Endothelial cell of umbilical vein (primary cell): ENCODE measurements at regions of chr17 and their contacts with region 1.

Region 1: DNA sequence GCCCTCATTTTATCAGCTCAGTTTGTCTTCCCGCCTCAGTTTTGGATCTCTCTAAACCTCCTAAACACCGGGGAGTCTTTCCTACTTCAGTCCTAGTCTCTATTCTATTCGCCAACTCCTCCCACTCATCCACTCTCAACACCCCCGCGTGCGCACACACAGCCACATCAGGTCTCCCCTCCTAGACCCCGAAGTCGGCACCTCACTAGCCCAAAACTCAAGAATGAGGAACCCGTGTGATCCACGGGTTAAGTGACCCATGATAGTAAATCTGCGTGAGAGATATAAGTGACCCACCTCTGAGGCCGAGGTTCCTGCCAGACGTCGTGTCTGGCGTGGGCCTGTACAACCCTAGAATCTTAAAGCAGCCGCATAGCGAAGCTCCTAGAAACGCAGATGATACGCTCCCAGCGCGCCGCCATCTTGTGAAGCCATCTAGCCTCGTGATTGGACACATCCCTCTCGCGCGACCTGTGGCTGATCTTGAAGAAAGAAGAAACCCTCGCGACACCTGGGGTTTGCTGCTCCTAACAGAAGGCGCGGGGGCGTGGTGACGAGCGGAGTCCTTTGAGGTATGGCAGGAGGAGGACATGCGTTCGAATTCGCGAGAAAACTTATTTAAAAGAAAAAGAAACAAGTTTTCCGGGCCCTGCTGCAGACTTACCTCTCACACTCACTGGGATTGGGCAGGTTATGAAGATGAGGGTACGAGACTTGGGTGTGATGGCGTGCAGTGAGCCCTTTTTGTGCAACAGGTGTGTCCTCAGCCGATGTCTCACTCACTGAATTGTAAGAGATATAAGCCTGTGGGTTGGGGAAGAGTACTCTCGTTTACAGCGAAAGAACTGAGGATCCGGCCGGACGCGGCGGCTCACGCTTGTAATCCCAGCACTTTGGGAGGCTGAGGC is at the start of gene METTL16:
- DNase-seq: peak; percentile 99
- H3K4me3 ChIP-seq: peak within 1 kb of the TSS; percentile 68 to 100 (median 99)
- H3K27ac ChIP-seq: peak within 1 kb of the TSS; percentile 86
- H3K4me1 ChIP-seq: peaks cover 10% of the 10 kb centered on the region
- H3K27me3 ChIP-seq: no peaks in the 10 kb centered on the region
- CTCF ChIP-seq: no peak
- POLR2A ChIP-seq: peak; percentile 69
- total RNA-seq, gene METTL16: 22.9 and 24.7 TPM in 2 replicates

Region 2: GRCh38 chr17:2468270-2468669 is 43.4 kb before region 1 on chr17:
- CTCF ChIA-PET with region 1: no interaction called
- POLR2A ChIA-PET with region 1: no interaction called
- dilution Hi-C with region 1: no loop called
- intact Hi-C with region 1: no loop called
- DNase-seq: no peak
- H3K4me3 ChIP-seq: no peak overlapping the region
- H3K27ac ChIP-seq: no peak overlapping the region
- H3K4me1 ChIP-seq: no peaks in the 10 kb centered on the region
- H3K27me3 ChIP-seq: no peaks in the 10 kb centered on the region
- CTCF ChIP-seq: no peak
- POLR2A ChIP-seq: no peak

Region 3: DNA sequence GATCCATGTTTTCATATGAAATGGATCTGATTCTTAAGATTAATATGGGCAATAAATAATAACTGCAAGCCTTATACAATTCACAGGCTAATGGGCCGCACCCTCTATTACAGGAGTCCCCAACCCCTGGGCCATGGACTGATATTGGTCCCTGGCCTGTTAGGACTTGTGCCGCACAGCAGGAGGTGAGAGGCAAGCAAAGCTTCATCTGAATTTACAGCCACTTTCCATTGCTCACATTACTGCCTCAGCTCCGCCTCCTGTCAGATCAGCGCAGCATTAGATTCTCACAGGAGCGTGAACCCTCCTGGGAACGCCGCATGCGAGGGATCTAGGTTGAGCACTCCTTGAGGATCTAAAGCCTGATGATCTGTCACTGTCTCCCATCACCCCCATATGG is 26.8 kb before region 1 on chr17:
- CTCF ChIA-PET with region 1: interaction called, 4 read pairs
- POLR2A ChIA-PET with region 1: no interaction called
- dilution Hi-C with region 1: no loop called
- intact Hi-C with region 1: loop called (anchors 2 kb)
- DNase-seq: no peak
- H3K4me3 ChIP-seq: no peak overlapping the region
- H3K27ac ChIP-seq: no peak overlapping the region
- H3K4me1 ChIP-seq: peaks cover 5% of the 10 kb centered on the region
- H3K27me3 ChIP-seq: no peaks in the 10 kb centered on the region
- CTCF ChIP-seq: no peak
- POLR2A ChIP-seq: no peak

Region 4: DNA sequence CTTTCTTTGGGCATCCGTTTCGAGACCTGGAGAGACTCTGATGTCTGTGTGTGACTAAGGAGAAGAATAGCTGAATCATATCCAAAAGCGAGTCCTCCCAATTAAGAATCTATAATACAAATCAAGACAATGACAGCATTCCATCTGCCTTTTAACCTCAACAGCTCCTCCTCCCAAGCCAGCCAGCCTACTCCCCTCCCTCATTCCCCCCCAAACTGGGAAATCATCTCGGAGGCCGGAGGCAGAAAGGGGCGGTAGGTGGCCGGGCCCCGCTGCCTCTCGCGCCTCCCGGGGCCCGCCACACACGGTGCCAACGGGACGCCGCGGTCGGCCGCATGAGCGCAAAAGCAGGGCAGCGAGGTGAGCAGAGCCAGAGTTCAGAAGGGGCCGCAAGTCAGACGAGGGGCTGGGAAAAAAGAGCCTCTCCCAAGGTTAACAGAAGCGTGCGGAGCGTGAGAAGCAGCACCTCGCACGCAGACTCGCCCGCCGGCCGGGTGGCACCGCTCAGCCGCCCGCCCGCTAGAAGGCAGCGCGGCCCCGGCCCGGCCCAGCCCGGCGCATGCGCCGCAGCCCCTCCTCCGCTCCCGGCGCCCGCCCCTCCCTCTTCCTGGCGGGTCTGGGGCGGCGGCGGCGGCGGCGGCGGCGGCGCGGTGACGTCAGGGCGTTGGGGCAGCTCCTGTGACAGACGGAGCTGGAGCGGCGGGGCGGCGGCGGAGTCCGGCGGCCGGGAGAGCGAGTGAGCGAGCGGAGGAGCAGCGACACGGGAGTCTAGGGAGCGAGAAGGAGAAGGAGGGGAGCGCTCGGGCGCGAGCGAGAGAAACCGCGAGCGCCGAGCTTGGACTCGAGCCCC is 81.5 kb after region 1 on chr17 and contains the start of gene PAFAH1B1:
- CTCF ChIA-PET with region 1: no interaction called
- POLR2A ChIA-PET with region 1: interaction called, 4 read pairs
- dilution Hi-C with region 1: no loop called
- intact Hi-C with region 1: loop called (anchors 1 kb)
- DNase-seq: peak; percentile 90
- H3K4me3 ChIP-seq: peak within 1 kb of the TSS; percentile 95 to 100 (median 98)
- H3K27ac ChIP-seq: peak within 1 kb of the TSS; percentile 96
- H3K4me1 ChIP-seq: peaks cover 22% of the 10 kb centered on the region
- H3K27me3 ChIP-seq: no peaks in the 10 kb centered on the region
- CTCF ChIP-seq: no peak
- POLR2A ChIP-seq: peak; percentile 88
- total RNA-seq, gene PAFAH1B1: 153 and 158 TPM in 2 replicates

Region 5: DNA sequence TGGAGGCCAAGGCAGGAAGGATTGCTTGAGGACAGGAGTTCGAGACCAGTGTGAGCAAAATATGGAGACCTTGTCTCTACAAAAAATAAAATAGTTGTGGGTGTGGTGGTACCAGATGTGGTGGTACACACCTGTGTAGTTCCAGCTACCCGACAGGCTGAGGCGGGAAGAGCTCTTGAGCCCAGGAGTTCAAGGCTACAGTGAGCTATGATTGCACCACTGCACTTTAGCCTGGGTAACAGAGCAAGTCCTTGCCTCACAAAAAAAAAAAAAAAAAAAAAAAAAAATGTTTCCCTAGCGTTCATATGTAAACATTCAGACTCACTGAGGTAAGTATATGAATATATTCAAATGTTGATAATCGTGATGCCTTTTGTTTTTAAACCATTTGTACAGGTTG is 160.3 kb after region 1 on chr17:
- CTCF ChIA-PET with region 1: interaction called, 4 read pairs
- POLR2A ChIA-PET with region 1: no interaction called
- dilution Hi-C with region 1: no loop called
- intact Hi-C with region 1: loop called (anchors 10 kb)
- DNase-seq: no peak
- H3K4me3 ChIP-seq: no peak overlapping the region
- H3K27ac ChIP-seq: no peak overlapping the region
- H3K4me1 ChIP-seq: no peaks in the 10 kb centered on the region
- H3K27me3 ChIP-seq: no peaks in the 10 kb centered on the region
- CTCF ChIP-seq: no peak
- POLR2A ChIP-seq: no peak